Left colon (tissue), 2 donors: ENCODE measurements at regions of chr15 and their contacts with region 1.

Region 1: DNA sequence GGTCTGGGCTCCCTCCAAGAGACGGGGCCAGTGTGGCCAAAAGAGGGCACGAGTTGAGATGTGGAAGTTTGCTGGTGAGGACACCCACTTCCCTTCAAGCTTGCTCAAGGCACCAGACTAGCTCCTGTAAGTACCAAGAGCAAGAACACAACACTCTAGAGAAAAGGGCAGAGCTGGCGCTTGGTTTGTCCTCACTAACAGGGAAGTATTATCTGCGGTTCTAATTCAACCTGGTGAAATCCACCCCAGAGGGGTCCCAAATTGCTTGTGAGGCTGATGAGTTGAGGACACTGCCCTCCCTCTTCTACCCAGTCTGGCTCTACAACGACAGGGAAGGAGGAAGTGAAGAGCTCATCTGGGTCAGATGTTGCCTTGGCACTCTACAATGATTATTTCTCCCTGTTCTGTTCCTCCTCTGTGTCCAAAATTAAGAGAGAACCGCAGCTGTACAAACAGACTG is 16.9 kb upstream of the FSIP1 start:
- DNase-seq: no peak
- ATAC-seq: no peak

Region 2: DNA sequence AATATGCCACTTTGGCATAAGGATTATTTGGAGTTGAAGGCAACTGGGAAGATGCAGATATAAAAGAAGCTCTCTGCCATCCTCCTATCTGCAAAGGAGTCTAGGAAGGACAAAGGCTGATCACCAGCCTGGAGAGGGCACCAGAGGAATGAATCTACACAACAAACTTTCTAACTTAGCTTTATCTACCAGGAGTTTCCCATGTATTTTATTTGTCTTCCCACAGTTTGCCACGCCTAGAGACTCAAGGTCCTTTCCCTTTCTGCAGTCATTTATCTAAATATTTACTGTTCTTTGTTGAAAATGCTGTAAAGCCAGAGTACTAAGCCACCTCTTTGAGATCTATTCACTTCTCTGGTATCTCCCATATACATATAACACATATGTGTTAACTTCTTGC is 88.2 kb after region 1 on chr15:
- intact Hi-C with region 1: loop called in 1 of 2 experiments (anchors 10 kb)
- DNase-seq: peak; percentile 54
- ATAC-seq: peak; percentile 94